AG04450 (cell line): ENCODE measurements at regions of chr3 and their contacts with region 1.

Region 1: GRCh38 chr3:27681245-27681748 is 40.8 kb downstream of the EOMES start:
- DNase-seq: peak; percentile 59
- H3K4me3 ChIP-seq: no peak overlapping the region
- H3K27ac ChIP-seq: no peak overlapping the region
- H3K27me3 ChIP-seq: no peaks in the 10 kb centered on the region
- CTCF ChIP-seq: peak; percentile 67

Region 2: DNA sequence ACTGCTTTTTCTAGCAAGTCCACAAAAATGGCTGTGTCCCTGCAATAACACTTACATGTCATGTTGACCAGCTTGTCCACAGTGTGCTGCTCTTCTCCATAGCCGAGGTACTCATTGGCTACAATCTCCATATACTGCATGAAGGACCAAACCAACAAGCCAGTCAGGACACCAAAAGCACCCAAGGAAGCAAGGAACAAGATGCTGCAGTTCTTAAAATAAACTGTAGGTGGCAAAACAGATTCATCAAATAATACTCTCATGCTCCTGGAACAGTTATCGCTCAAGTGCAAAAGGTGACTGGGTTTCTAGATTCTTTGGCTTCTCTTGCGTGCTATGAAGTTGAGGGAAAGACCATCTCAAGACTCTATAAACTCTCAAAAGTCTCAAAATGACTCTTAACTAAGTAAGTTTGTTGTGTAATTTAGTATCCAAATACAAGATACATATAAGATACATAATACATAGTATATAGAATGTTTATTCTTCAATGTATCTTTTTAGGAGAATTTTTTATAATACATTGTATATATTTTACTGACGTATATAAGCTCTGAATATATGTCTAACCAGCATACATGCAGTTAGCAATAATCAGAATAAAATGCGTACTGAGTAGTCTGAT is 369.1 kb before region 1 on chr3:
- CTCF ChIA-PET with region 1: interaction called, 24 read pairs
- POLR2A ChIA-PET with region 1: no interaction called
- DNase-seq: peak; percentile 42
- H3K4me3 ChIP-seq: no peak overlapping the region
- H3K27ac ChIP-seq: no peak overlapping the region
- H3K27me3 ChIP-seq: no peaks in the 10 kb centered on the region
- CTCF ChIP-seq: peak; percentile 78

Region 3: DNA sequence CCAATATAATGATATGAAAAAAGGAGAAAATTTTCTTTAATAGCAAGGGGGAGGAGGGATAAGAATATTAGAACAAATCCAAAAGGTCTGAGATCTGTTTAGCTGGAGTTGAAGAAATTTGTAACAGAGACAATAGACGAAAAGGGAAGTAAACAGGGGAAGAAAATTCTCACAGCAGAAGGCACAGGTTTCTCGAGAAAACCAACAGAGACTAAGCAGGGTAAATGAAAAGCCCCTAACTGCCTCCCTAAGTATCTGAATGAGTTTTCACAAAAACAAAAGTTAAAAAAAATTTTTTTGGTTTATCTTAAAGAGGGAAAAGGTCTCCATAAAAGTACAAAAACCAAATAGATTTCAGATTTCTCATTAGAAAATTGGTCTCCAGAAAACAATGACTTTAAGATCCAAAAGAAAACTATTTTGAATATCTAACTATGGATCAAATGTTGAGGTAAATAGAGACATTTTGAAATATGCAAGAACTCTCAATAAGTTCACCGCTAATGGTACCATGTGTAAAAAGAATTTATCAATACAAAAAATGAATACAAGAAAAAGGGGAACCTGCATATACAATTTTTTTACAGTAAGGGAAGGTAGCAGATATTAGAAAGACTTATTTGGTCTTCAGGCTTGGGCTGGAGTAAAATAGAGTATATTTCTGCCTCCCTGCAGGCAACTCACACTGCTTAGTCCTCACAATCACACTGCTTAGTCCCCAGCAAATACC is 288.2 kb before region 1 on chr3:
- CTCF ChIA-PET with region 1: interaction called, 11 read pairs
- POLR2A ChIA-PET with region 1: no interaction called
- DNase-seq: no peak
- H3K4me3 ChIP-seq: no peak overlapping the region
- H3K27ac ChIP-seq: no peak overlapping the region
- H3K27me3 ChIP-seq: no peaks in the 10 kb centered on the region
- CTCF ChIP-seq: no peak

Region 4: DNA sequence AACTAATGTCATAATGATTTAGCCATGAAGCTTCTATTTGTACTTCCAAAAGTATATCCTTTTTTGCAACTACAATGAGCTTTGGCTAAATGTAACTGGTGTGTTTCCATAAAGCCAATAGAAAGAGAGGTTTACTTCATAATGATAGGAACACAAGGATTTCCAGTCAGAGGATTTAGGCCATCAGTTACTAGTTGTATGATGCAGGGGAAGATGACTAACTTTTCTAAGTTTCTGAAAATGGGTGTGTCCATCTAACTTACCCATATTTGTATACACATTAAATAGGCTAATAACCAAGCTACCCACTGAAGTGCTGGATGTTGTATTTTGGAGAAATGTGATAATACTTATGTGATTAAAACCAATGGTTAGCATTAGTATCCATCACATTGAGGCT is 252.9 kb before region 1 on chr3:
- CTCF ChIA-PET with region 1: interaction called, 15 read pairs
- POLR2A ChIA-PET with region 1: no interaction called
- DNase-seq: no peak
- H3K4me3 ChIP-seq: no peak overlapping the region
- H3K27ac ChIP-seq: no peak overlapping the region
- H3K27me3 ChIP-seq: no peaks in the 10 kb centered on the region
- CTCF ChIP-seq: no peak

Region 5: GRCh38 chr3:27533718-27534573 is 147.4 kb before region 1 on chr3:
- CTCF ChIA-PET with region 1: interaction called, 15 read pairs
- POLR2A ChIA-PET with region 1: interaction called, 5 read pairs
- DNase-seq: peak; percentile 97
- H3K4me3 ChIP-seq: no peak overlapping the region
- H3K27ac ChIP-seq: peak overlapping the region; percentile 94
- H3K27me3 ChIP-seq: no peaks in the 10 kb centered on the region
- CTCF ChIP-seq: peak; percentile 78

Region 6: DNA sequence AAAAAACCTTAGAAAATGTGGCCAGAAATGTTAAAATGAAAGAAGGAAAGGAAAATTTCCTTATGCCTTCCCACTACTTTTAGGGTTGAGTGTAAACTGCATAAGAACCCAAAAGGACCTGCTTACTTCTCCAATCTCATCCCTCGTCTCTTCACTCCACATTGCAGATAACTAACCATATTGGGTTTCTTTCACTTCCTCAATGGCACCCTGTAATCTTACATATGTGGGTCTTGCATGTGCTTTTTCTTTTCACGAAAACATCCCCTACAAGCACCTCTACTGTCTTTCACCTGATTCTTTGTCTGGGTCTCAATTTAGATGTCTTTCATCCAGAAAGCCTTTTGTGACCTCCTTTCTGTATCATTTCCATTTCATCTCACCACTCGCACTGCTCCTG is 17.8 kb after region 1 on chr3:
- CTCF ChIA-PET with region 1: interaction called, 16 read pairs
- POLR2A ChIA-PET with region 1: interaction called, 8 read pairs
- DNase-seq: no peak
- H3K4me3 ChIP-seq: no peak overlapping the region
- H3K27ac ChIP-seq: no peak overlapping the region
- H3K27me3 ChIP-seq: no peaks in the 10 kb centered on the region
- CTCF ChIP-seq: no peak